ENCODE measurements at regions of chr2 and their contacts with region 1.

Region 1: DNA sequence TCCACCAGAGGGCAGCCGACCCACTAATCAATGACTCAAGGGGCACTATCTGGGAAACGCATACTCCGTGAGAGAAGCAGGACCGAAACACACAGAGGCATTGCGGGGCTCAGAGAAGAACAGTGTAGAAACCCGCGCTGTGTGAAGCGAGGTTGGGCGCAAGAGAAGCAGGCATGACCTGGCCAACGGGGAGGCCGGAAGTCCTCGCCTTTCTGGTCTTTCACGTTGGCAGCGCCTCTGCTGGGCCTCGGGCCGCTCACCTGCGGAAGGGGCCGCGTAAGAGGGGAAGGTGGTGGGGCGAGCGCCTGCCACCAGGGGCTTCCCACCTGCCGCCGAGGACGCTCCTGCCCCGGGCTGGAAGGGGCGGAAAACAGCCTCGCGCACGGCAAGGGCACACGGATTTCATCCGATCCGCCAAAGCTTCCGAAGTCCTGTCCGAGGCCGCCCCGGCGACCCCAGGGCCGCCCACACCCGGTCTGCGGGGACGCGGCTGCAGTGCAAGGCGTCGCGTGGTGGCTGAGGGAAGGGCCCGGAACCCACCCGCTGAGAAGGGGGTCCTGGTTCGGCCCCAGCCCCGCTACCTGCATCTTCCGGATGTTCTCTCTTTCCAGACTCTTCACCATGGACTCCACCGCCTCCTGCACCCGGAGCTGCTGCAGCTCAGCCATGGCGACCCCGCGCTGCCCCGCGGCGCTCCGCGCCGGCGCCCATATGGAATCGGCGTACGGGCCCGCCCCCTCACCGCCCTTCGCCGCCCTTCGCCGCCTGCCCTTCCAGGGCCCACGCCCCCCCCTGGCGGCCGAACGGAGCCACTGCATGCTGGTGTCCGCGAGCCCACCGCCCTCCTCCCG is at the start of gene FAM136A:
- DNase-seq: peak; percentile 88 to 92
- ATAC-seq: peak; percentile 94 to 98 (median 94)
- H3K4me3 ChIP-seq: peak within 1 kb of the TSS; percentile 85
- H3K4me3 Mint-ChIP-seq: peak within 1 kb of the TSS; percentile 95
- H3K27ac ChIP-seq: peak within 1 kb of the TSS; percentile 69
- H3K27ac Mint-ChIP-seq: peak within 1 kb of the TSS; percentile 79 to 83
- H3K4me1 ChIP-seq: peaks cover 18% of the 10 kb centered on the region
- H3K4me1 Mint-ChIP-seq: peaks cover 19 to 23% of the 10 kb centered on the region in 2 donors
- H3K27me3 ChIP-seq: no peaks in the 10 kb centered on the region
- H3K27me3 Mint-ChIP-seq: no peaks in the 10 kb centered on the region
- CTCF ChIP-seq: peak; percentile 76
- total RNA-seq, gene FAM136A: 32.5 to 38.3 (median 36.6) TPM

Region 2: DNA sequence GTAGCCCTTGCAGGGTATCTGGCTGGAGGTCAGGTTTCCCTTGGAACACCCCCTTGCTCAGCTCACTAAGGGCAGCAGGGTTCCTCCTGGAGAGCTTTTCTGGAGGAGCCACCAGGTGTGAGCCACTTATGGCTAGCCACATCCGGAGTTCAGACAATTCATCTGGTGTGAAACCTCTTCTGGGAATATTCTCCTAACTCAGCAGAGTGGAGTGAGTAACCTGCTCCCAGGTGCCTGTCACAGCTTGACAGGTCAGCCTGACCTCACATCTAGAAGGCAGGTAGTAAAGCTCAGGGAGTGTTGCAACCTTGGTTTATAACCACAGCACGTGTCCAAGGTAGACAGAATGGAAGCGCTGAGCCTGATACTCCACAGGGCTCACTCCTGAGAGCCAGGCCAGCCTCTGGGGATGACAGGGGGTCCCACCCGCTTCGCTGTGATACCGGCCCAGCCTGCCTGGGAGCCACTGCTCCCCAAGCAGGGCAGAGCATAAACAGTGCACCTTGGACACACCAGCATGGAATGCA is 314.7 kb after region 1 on chr2:
- intact Hi-C with region 1: loop called (anchors 1 kb)
- DNase-seq: no peak
- ATAC-seq: no peak
- H3K4me3 ChIP-seq: no peak overlapping the region
- H3K4me3 Mint-ChIP-seq: no peak overlapping the region
- H3K27ac ChIP-seq: no peak overlapping the region
- H3K27ac Mint-ChIP-seq: no peak overlapping the region
- H3K4me1 ChIP-seq: no peaks in the 10 kb centered on the region
- H3K4me1 Mint-ChIP-seq: no peaks in the 10 kb centered on the region
- H3K27me3 ChIP-seq: no peaks in the 10 kb centered on the region
- H3K27me3 Mint-ChIP-seq: peaks cover 13 to 28% of the 10 kb centered on the region in 2 donors
- CTCF ChIP-seq: no peak

Region 3: GRCh38 chr2:70647873-70648481 is 346.4 kb after region 1 on chr2:
- intact Hi-C with region 1: loop called (anchors 1 kb)
- DNase-seq: peak; percentile 60 to 86
- ATAC-seq: peak; percentile 69 to 95 (median 90)
- H3K4me3 ChIP-seq: no peak overlapping the region
- H3K4me3 Mint-ChIP-seq: no peak overlapping the region
- H3K27ac ChIP-seq: no peak overlapping the region
- H3K27ac Mint-ChIP-seq: no peak overlapping the region
- H3K4me1 ChIP-seq: no peaks in the 10 kb centered on the region
- H3K4me1 Mint-ChIP-seq: no peaks in the 10 kb centered on the region
- H3K27me3 ChIP-seq: no peaks in the 10 kb centered on the region
- H3K27me3 Mint-ChIP-seq: peaks cover 18 to 21% of the 10 kb centered on the region in 2 donors
- CTCF ChIP-seq: peak; percentile 96

Measured in natural killer cell (primary cell).